ENCODE measurements at regions of chr19 and their contacts with region 1.

Region 1: DNA sequence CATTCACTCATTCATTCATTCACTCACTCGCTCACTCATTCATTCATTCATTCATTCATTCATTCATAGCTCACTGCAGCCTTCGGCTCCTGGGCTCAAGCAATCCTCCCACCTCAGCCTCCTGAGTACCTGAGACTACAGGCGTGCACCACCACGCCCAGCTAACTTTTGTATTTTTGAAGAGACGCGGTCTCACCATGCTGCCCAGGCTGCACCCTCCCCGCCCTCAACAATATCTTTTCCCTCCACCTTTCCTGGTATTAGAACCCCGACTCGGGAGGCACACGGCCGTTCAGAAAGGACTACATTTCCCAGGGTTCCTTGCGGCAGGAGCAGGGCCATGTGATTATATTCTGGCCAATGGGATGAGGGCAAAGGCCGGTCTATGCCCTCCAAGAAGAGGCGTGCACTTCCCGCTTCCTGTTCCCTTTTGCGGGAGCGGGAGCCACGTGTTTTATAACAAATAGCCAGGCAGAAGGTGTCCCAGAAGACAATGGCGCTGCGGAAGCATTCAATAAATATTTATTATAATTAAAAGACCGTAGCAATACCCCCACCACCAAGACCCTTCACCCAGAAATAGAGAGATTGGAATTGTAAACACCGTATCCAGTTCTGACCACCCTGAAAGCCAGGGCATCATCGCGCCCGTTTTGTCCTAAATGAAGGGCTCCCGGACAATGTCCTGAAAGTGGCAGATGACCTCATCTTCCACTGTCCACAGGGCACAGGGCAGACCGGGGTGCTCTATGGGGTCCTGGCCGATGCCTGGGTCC is 15.9 kb downstream of the TICAM1 start:
- DNase-seq: peak; percentile 93
- ATAC-seq: peak; percentile 82
- H3K4me3 ChIP-seq: peak overlapping the region in 1 of 3 experiments; percentile 27; a peak in 1 of 6 replicates
- H3K27ac ChIP-seq: peak overlapping the region; percentile 45
- H3K4me1 ChIP-seq: peaks cover 37% of the 10 kb centered on the region
- H3K27me3 ChIP-seq: no peaks in the 10 kb centered on the region
- CTCF ChIP-seq: no peak
- EP300 ChIP-seq: no peak
- POLR2A ChIP-seq: no peak; a peak in 1 of 4 replicates
- RAD21 ChIP-seq: no peak

Region 2: DNA sequence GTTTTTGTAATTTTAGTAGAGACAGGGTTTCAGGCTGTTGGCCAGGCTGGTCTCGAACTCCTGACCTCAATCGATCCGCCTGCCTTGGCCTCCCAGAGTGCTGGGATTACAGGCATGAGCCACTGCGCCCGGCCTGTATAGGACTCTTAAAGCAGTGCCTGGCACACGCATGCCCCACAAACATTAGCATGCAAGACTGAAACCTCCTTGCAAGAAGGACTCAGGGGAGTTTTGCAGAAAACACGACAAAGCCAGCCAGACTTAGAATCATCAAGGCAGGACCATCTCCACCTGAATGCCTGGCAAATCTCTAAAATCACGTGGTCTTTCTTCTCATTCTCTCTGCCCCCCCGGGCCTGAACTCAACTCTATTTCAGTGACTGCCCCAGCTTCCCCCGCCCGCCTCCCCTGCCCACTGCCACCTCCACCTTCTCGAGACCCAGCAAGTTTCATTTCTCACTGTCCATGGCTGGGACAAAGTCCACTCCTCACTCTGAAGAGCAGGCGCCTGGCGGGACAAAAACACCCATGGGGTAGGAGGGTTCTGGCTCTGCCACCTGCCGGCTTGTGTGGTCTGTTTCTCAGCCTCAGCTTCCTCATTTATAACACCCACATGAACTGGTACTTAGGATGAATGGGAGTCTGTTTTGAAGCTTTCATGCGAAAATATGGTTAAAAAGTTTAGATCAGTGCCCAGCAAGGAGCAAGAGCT is 13.5 kb after region 1 on chr19:
- CTCF ChIA-PET with region 1: interaction called, 14 read pairs
- POLR2A ChIA-PET with region 1: interaction called, 9 read pairs
- in situ Hi-C with region 1: no loop called
- intact Hi-C with region 1: loop called (anchors 1 kb)
- DNase-seq: peak; percentile 74
- ATAC-seq: peak; percentile 73
- H3K4me3 ChIP-seq: peak overlapping the region in 2 of 3 experiments; percentile 19 to 28; a peak in 1 of 6 replicates
- H3K27ac ChIP-seq: peak overlapping the region; percentile 47
- H3K4me1 ChIP-seq: peaks cover 27% of the 10 kb centered on the region
- H3K27me3 ChIP-seq: no peaks in the 10 kb centered on the region
- CTCF ChIP-seq: peak; percentile 62
- EP300 ChIP-seq: no peak
- POLR2A ChIP-seq: no peak
- RAD21 ChIP-seq: 0 out of 2 replicates have a peak, but pooled peaks have one; percentile 17

Region 3: GRCh38 chr19:4851551-4852290 is 36.1 kb after region 1 on chr19:
- CTCF ChIA-PET with region 1: interaction called, 33 read pairs
- POLR2A ChIA-PET with region 1: interaction called, 11 read pairs
- in situ Hi-C with region 1: no loop called
- intact Hi-C with region 1: no loop called
- DNase-seq: peak; percentile 85
- ATAC-seq: peak; percentile 96
- H3K4me3 ChIP-seq: no peak overlapping the region
- H3K27ac ChIP-seq: peak overlapping the region; percentile 38
- H3K4me1 ChIP-seq: peaks cover 11% of the 10 kb centered on the region
- H3K27me3 ChIP-seq: no peaks in the 10 kb centered on the region
- CTCF ChIP-seq: peak; percentile 98
- EP300 ChIP-seq: 0 out of 4 replicates have a peak, but pooled peaks of 1 of the 2 experiments have one; percentile 15
- POLR2A ChIP-seq: no peak
- RAD21 ChIP-seq: peak; percentile 92

Region 4: GRCh38 chr19:4909897-4910593 is 94.4 kb after region 1 on chr19:
- CTCF ChIA-PET with region 1: interaction called, 7 read pairs
- POLR2A ChIA-PET with region 1: no interaction called
- in situ Hi-C with region 1: loop called (anchors 5 kb)
- intact Hi-C with region 1: no loop called
- DNase-seq: peak; percentile 81
- ATAC-seq: peak; percentile 74
- H3K4me3 ChIP-seq: peak overlapping the region; percentile 70 to 79 (median 79)
- H3K27ac ChIP-seq: peak overlapping the region; percentile 88
- H3K4me1 ChIP-seq: peaks cover 71% of the 10 kb centered on the region
- H3K27me3 ChIP-seq: no peaks in the 10 kb centered on the region
- CTCF ChIP-seq: no peak
- EP300 ChIP-seq: no peak
- POLR2A ChIP-seq: no peak
- RAD21 ChIP-seq: no peak

Measured in HepG2 (cell line).